ENCODE measurements at regions of chrX and their contacts with region 1.

Region 1: DNA sequence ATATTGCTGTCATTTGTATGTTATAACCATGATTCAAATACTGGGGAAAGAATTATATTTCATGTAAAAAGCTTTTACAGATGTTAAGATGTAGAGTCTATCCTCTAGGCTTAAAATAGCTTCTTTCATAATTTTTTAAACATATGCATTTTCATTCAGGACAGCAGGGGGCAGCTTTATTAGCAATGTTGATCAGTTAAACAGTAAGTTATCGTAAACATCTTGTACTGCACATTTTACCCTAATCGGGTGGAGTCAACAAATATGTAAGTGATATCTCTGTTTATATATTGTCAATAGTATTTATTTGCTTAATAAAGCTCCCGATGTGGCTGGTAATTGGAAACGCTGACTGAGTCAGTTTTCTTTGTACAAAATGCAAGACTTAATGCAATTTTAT is 142.5 kb upstream of the MED14 start:
- DNase-seq: no peak
- H3K4me3 ChIP-seq: no peak overlapping the region
- H3K27ac ChIP-seq: no peak overlapping the region
- H3K4me1 ChIP-seq: no peaks in the 10 kb centered on the region
- H3K27me3 ChIP-seq: no peaks in the 10 kb centered on the region
- CTCF ChIP-seq: peak in 2 of 3 experiments; percentile 25 to 48

Region 2: GRCh38 chrX:40945361-40945713 is 67.5 kb after region 1 on chrX:
- intact Hi-C with region 1: no loop called
- DNase-seq: no peak
- H3K4me3 ChIP-seq: no peak overlapping the region
- H3K27ac ChIP-seq: no peak overlapping the region
- H3K4me1 ChIP-seq: no peaks in the 10 kb centered on the region
- H3K27me3 ChIP-seq: no peaks in the 10 kb centered on the region
- CTCF ChIP-seq: no peak

Region 3: GRCh38 chrX:41110801-41111625 is 233.1 kb after region 1 on chrX:
- intact Hi-C with region 1: loop called (anchors 5 kb)
- DNase-seq: no peak
- H3K4me3 ChIP-seq: no peak overlapping the region
- H3K27ac ChIP-seq: no peak overlapping the region
- H3K4me1 ChIP-seq: peaks cover 0 to 22% of the 10 kb centered on the region in 2 donors
- H3K27me3 ChIP-seq: no peaks in the 10 kb centered on the region
- CTCF ChIP-seq: no peak

Region 4: GRCh38 chrX:41350976-41351569 is 473.2 kb after region 1 on chrX:
- intact Hi-C with region 1: no loop called
- DNase-seq: no peak
- H3K4me3 ChIP-seq: no peak overlapping the region
- H3K27ac ChIP-seq: peak overlapping the region; percentile 33 to 41
- H3K4me1 ChIP-seq: no peaks in the 10 kb centered on the region
- H3K27me3 ChIP-seq: no peaks in the 10 kb centered on the region
- CTCF ChIP-seq: no peak